Left ventricle myocardium inferior (tissue), 1 donor: ENCODE measurements at regions of chr7 and their contacts with region 1.

Region 1: GRCh38 chr7:30625283-30625682 is 30.6 kb downstream of the GARS1 start:
- DNase-seq: no peak
- H3K4me3 ChIP-seq: no peak overlapping the region
- H3K27ac ChIP-seq: no peak overlapping the region
- H3K4me1 ChIP-seq: no peaks in the 10 kb centered on the region
- H3K27me3 ChIP-seq: no peaks in the 10 kb centered on the region
- CTCF ChIP-seq: peak; percentile 38

Region 2: GRCh38 chr7:30731619-30732018 is 106.3 kb after region 1 on chr7:
- intact Hi-C with region 1: loop called (anchors 10 kb)
- DNase-seq: no peak
- H3K4me3 ChIP-seq: no peak overlapping the region
- H3K27ac ChIP-seq: no peak overlapping the region
- H3K4me1 ChIP-seq: no peaks in the 10 kb centered on the region
- H3K27me3 ChIP-seq: peaks cover 30% of the 10 kb centered on the region
- CTCF ChIP-seq: no peak